Heart right ventricle (tissue), 16 donors: ENCODE measurements at regions of chr1 and their contacts with region 1.

Region 1: DNA sequence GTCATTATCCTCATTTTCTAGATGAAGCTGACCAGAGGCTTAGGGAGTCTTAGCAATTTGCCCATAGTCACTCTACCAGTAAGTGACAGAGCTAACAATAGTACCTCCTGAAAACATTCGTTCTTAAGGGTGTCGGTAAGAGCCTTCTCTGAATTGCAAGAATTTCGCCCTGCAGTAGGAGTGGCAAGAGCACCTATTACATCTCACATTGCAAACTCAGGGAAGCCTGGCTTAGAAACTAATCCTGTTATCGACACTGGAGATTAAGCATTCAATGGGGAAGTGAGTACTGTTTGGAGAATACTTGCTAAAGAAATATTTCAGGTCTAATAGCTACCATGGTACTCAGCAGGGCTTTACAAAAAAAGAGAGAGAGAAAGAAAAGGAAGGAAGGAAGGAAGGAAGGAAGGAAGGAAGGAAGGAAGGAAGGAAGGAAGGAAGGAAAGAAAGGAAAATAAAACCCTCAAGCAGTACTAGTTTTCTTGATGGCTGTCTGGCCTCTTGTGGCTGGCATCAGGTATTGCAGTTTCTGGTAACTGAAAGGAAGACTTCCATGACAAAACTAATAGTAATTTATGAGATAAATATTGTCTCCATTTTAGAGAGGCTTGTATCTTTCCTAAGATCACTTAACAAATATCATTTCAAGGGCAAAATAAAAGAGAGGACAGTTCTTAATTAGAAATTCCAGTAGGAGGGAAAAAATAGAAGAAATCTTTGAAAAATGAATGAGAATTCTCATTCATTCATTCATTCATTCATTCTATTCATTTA is 10.4 kb downstream of the C1orf226 start:
- DNase-seq: no peak
- ATAC-seq: peak in 1 of 8 donors; percentile 53
- H3K4me3 ChIP-seq: no peak overlapping the region
- H3K27ac ChIP-seq: no peak overlapping the region
- H3K4me1 ChIP-seq: peaks cover 0 to 5% (median 0%) of the 10 kb centered on the region in 9 donors
- H3K27me3 ChIP-seq: peaks cover 3 to 23% (median 6%) of the 10 kb centered on the region in 7 donors
- CTCF ChIP-seq: peak; percentile 52 to 87 (median 78)

Region 2: DNA sequence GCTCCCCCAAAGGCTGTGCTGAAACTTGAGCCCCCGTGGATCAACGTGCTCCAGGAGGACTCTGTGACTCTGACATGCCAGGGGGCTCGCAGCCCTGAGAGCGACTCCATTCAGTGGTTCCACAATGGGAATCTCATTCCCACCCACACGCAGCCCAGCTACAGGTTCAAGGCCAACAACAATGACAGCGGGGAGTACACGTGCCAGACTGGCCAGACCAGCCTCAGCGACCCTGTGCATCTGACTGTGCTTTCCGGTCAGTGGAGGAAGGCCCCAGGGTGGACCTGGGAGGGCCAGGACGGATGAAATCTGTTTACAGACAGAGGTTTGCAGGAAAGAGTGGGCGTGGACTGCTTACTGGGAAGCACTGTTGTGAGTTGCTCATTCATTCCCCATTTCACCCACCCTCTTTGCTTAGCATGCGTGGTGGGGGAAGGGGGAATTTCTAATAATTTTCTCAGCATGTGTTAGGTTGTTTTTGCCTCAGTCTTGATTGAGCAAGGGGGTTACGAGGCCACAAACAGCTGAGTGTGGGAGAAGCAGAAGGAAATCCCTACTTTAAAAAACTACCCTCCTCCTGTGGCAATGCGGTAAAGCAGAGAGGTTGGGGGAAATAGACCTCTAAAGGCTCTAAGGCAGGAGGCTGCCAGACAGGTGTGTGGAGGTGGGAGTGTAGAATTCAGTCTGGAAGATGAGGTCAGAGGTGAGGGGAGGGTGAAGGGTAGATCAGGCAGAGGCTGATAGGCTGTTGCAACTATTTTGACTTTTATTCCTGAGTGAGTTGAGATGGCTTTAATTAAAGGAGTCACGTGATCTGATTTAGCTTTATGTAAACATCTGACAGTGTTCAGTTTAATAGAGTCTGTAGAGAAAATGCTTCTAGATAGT is 885.4 kb before region 1 on chr1:
- intact Hi-C with region 1: no loop called
- DNase-seq: peak in 1 of 2 donors; percentile 16
- ATAC-seq: peak; percentile 51 to 73 (median 60)
- H3K4me3 ChIP-seq: peak overlapping the region in 7 of 10 donors; percentile 11 to 52 (median 35)
- H3K27ac ChIP-seq: peak overlapping the region in 6 of 10 donors; percentile 4 to 94 (median 52)
- H3K4me1 ChIP-seq: peaks cover 0 to 20% (median 0%) of the 10 kb centered on the region in 9 donors
- H3K27me3 ChIP-seq: peaks cover 0 to 56% (median 20%) of the 10 kb centered on the region in 7 donors
- CTCF ChIP-seq: no peak

Region 3: GRCh38 chr1:161792740-161793139 is 599.2 kb before region 1 on chr1:
- intact Hi-C with region 1: loop called in 1 of 10 experiments (anchors 5 kb)
- DNase-seq: peak in 1 of 2 donors; percentile 11
- ATAC-seq: peak in 7 of 8 donors; percentile 21 to 66 (median 45)
- H3K4me3 ChIP-seq: no peak overlapping the region
- H3K27ac ChIP-seq: no peak overlapping the region
- H3K4me1 ChIP-seq: no peaks in the 10 kb centered on the region
- H3K27me3 ChIP-seq: no peaks in the 10 kb centered on the region
- CTCF ChIP-seq: peak; percentile 16 to 75 (median 62)

Region 4: DNA sequence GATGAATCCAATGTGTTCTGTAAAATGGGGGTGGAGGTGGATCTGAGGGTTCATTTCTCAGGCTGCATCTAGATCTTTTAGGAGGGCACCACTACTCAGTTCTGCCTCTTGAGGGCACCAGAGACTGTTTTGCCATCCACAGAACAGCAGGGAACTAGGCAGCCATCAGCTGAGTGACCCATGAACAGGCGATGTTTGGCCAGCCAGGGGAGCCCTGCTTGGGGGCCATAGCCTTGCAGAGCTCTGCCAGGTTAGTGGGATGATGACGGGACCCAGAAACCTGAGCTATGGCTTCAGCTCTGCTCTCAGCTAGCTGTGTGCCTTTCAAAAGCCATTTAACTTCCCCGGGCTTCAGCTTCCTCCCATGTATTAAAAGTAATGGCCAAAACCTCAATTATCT is 335.9 kb before region 1 on chr1:
- intact Hi-C with region 1: loop called (anchors 1 to 5 kb)
- DNase-seq: peak; percentile 30 to 62
- ATAC-seq: peak; percentile 87 to 95 (median 90)
- H3K4me3 ChIP-seq: no peak overlapping the region
- H3K27ac ChIP-seq: no peak overlapping the region
- H3K4me1 ChIP-seq: peaks cover 0 to 3% (median 0%) of the 10 kb centered on the region in 9 donors
- H3K27me3 ChIP-seq: peaks cover 0 to 4% (median 0%) of the 10 kb centered on the region in 7 donors
- CTCF ChIP-seq: peak; percentile 75 to 92 (median 89)

Region 5: DNA sequence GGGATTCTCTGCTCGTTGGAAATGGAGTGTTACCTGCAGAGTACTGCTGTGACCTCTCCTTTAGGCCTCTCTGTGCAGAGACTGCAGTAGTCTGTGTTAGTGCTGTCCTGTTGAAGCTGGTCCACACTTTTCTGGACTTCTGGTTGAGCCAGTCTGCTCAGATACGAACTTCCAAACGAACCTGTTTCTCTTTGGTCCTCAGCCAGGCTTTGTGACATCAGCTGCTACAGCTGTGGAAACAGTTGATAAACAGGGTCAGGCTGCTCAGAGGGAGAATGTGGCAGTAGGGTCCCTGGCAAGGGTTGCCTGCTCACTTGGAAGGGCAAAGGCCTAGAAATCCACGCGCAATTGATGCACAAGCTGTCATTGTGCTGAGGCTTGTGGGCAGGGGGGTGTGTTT is 223.7 kb before region 1 on chr1:
- intact Hi-C with region 1: no loop called
- DNase-seq: peak in 1 of 2 donors; percentile 32
- ATAC-seq: peak in 7 of 8 donors; percentile 42 to 85 (median 68)
- H3K4me3 ChIP-seq: no peak overlapping the region
- H3K27ac ChIP-seq: peak overlapping the region in 2 of 10 donors; percentile 15 to 51
- H3K4me1 ChIP-seq: peaks cover 0 to 28% (median 4%) of the 10 kb centered on the region in 9 donors
- H3K27me3 ChIP-seq: no peaks in the 10 kb centered on the region
- CTCF ChIP-seq: no peak

Region 6: GRCh38 chr1:162276493-162276892 is 115.5 kb before region 1 on chr1:
- intact Hi-C with region 1: loop called in 3 of 10 experiments (anchors 5 to 10 kb)
- DNase-seq: no peak
- ATAC-seq: peak in 2 of 8 donors; percentile 38 to 48
- H3K4me3 ChIP-seq: no peak overlapping the region
- H3K27ac ChIP-seq: no peak overlapping the region
- H3K4me1 ChIP-seq: peaks cover 0 to 8% (median 0%) of the 10 kb centered on the region in 9 donors
- H3K27me3 ChIP-seq: peaks cover 0 to 6% (median 0%) of the 10 kb centered on the region in 7 donors
- CTCF ChIP-seq: peak in 7 of 9 donors; percentile 32 to 58 (median 48)

Region 7: GRCh38 chr1:162285149-162285561 is 106.8 kb before region 1 on chr1:
- intact Hi-C with region 1: loop called in 3 of 10 experiments (anchors 5 to 10 kb)
- DNase-seq: peak; percentile 15 to 42
- ATAC-seq: peak; percentile 78 to 90 (median 86)
- H3K4me3 ChIP-seq: no peak overlapping the region
- H3K27ac ChIP-seq: peak overlapping the region in 7 of 10 donors; percentile 14 to 74 (median 42)
- H3K4me1 ChIP-seq: peaks cover 0 to 31% (median 17%) of the 10 kb centered on the region in 9 donors
- H3K27me3 ChIP-seq: peaks cover 0 to 5% (median 0%) of the 10 kb centered on the region in 7 donors
- CTCF ChIP-seq: no peak

Region 8: GRCh38 chr1:162292422-162292849 is 99.5 kb before region 1 on chr1:
- intact Hi-C with region 1: loop called in 2 of 10 experiments (anchors 10 kb)
- DNase-seq: no peak
- ATAC-seq: no peak
- H3K4me3 ChIP-seq: no peak overlapping the region
- H3K27ac ChIP-seq: no peak overlapping the region
- H3K4me1 ChIP-seq: peaks cover 0 to 6% (median 0%) of the 10 kb centered on the region in 9 donors
- H3K27me3 ChIP-seq: no peaks in the 10 kb centered on the region
- CTCF ChIP-seq: no peak